ENCODE measurements at regions of chr2 and their contacts with region 1.

Region 1: DNA sequence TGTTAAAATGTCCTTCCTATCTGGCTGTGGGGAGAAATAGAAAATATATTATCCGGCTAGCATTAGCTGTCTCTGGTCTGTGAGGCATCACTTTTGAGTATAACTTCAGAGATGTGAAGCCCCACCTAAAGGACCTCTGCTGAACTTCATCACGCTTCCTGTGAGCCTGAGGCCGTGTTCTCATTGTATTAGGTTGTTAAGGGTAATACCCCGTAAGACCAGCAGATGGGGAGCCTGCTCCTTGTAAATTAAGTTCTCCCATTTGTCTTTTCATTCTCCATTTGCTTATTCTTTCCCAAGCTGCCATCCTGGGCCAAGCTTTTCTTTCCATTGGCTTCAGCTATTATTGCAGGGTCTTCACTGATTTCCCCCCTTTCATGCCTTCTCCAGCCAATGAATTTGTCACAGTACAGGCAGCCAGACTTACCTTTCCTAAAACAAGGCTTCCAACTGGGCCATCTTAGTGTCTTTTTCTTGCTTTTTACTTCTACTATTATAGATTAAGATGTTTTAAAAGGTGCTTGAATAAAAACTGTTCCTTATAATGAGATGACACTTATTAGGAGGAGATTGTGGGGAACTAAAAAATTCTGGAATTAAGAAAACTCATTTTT is 12.4 kb downstream of the NIF3L1 start:
- DNase-seq: peak; percentile 63
- H3K4me3 ChIP-seq: no peak overlapping the region
- H3K27me3 ChIP-seq: no peaks in the 10 kb centered on the region
- CTCF ChIP-seq: peak; percentile 83

Region 2: DNA sequence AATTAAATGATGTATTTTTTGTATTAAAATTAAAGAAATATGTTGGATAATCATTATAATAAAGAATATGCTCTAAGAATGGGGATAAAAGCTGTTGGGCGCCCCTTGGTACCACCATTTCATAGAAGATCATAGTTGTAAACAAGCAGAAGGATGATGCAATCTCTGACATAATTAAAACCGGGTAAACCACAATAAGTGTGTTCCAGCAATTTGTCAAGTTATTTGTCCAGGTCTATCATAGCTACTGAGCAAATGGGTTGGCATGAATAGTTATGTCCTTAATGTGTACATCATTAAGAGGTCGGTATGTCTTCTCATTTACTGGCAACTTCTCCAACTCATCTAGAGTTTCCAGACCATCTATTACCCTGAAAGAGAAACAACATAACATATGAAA is 30.4 kb before region 1 on chr2:
- CTCF ChIA-PET with region 1: no interaction called
- POLR2A ChIA-PET with region 1: no interaction called
- DNase-seq: no peak
- H3K4me3 ChIP-seq: no peak overlapping the region
- H3K27me3 ChIP-seq: no peaks in the 10 kb centered on the region
- CTCF ChIP-seq: no peak

Region 3: GRCh38 chr2:200963124-200963917 is 61.8 kb after region 1 on chr2 and contains the start of gene ORC2:
- CTCF ChIA-PET with region 1: interaction called, 10 read pairs
- POLR2A ChIA-PET with region 1: no interaction called
- DNase-seq: peak; percentile 59
- H3K4me3 ChIP-seq: peak within 1 kb of the TSS; percentile 79
- H3K27me3 ChIP-seq: no peaks in the 10 kb centered on the region
- CTCF ChIP-seq: peak; percentile 64
- polyA plus RNA-seq, gene ORC2: 1.9 and 3.7 TPM in 2 replicates

Region 4: DNA sequence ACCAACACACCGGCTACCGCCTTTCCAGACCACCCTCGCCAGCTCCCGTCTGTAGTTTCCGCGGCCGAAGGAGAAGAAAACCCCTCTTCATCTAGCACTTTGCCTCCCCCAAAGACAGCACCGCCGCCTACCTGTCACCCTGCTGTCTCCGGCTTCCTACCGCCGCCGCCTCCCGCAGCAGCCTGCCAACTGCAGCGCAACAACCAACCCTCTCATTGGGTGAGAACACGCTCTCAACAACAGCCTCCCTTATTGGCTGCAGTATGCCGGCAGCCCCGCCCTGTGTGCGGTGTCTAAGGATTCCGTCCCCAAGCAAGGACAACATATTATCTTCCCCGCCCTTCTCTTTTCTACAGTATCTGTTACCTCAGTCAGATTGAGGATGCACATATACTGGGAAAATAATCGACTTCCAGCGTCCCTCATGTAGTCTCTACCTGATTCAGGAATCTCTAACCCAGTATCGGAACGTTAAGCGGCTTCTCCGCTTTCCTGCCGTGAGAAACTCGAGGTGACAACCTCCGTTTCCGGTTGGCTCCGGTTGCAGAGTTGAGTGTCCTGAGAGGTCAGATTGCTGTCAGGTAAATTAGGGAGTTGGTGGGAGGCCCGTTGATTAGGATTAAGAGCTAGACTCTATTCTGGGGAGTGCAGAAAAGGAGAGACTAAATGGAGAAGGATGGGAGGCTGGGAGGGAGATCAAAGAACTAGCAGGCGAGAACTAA is 170.1 kb after region 1 on chr2 and contains the starts of genes HYCC2 and NDUFB3:
- CTCF ChIA-PET with region 1: interaction called, 87 read pairs
- POLR2A ChIA-PET with region 1: no interaction called
- DNase-seq: peak; percentile 58
- H3K4me3 ChIP-seq: peak within 1 kb of the TSS; percentile 99
- H3K27me3 ChIP-seq: no peaks in the 10 kb centered on the region
- CTCF ChIP-seq: peak; percentile 46
- polyA plus RNA-seq, gene HYCC2: 3.0 and 6.9 TPM in 2 replicates
- polyA plus RNA-seq, gene NDUFB3: 25.2 and 80.0 TPM in 2 replicates

Region 5: DNA sequence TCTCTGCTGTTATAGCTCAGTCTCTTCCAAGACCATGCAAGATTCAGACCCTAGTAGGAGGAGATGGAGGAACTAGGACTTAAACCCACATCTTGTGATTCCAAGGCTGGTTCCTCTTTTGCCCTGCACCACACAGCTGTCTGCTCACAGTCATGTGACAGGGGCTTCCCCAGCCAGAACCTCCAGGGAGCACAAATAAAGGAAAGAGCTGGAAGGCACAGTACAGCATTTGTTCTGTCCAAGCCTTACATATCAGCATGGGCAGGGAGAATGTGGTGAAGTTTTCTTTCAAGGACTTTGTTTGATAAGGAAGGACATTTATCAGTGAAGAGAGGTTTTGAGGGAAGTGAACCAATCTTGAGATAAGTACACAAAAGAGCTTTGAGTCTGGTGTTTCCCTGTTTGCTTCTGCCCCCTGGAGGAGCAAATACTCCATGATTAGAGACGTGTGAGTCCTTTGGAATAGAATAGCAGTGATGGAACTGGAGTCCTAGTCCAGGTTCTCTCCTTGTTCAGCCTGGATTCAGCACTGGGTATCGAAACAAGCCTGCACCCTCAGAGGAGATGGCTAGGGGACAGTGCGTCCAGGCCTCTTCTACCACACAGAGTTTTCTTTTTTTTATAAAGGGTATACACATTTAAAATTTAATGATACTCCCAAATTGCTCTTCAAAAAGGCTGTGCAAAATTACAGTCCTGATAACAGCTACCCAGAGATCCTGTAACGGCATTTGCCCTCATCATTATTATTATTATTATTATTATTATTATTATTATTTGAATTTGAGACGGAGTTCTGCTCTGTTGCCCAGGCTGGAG is 256.8 kb after region 1 on chr2:
- CTCF ChIA-PET with region 1: interaction called, 22 read pairs
- POLR2A ChIA-PET with region 1: no interaction called
- DNase-seq: peak; percentile 31
- H3K4me3 ChIP-seq: no peak overlapping the region
- H3K27me3 ChIP-seq: no peaks in the 10 kb centered on the region
- CTCF ChIP-seq: peak; percentile 71

Region 6: DNA sequence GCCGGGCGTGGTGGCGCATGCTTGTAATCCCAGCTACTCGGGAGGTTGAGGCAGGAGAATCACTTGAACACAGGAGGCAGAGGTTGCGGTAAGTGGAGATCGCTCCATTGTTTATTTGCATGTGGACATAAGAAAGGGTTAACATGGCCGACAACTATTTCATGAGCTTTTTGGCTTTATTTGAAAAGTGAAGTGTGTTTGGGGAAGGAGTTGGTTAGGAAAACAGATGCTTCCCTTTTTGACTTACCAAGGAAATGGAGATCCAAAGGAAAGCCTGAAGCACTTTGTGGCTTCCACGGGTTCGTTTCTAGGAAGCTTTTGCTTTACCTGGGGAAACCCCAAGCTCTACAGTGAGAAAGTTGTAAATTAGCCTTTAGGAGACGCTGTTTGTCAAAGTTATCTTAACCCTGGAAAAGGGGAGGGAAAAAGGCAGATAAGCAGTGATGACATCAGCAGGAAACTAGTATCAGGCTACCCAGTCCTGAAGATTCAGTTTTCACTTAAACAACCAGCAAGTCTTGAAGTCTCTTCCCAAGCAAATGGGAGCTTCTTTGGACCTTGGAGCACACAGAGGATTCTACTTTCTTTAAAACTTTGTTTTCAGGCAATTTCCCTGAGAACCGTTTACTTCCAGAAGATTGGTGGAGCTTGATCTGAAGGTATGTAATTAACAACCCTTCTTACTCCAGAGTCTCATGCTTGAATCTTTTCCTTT is 281.2 kb after region 1 on chr2 and contains the start of gene CASP10:
- CTCF ChIA-PET with region 1: interaction called, 44 read pairs
- POLR2A ChIA-PET with region 1: no interaction called
- DNase-seq: no peak
- H3K4me3 ChIP-seq: peak within 1 kb of the TSS; percentile 29
- H3K27me3 ChIP-seq: no peaks in the 10 kb centered on the region
- CTCF ChIP-seq: no peak
- polyA plus RNA-seq, gene CASP10: 0.83 and 1.0 TPM in 2 replicates

Region 7: DNA sequence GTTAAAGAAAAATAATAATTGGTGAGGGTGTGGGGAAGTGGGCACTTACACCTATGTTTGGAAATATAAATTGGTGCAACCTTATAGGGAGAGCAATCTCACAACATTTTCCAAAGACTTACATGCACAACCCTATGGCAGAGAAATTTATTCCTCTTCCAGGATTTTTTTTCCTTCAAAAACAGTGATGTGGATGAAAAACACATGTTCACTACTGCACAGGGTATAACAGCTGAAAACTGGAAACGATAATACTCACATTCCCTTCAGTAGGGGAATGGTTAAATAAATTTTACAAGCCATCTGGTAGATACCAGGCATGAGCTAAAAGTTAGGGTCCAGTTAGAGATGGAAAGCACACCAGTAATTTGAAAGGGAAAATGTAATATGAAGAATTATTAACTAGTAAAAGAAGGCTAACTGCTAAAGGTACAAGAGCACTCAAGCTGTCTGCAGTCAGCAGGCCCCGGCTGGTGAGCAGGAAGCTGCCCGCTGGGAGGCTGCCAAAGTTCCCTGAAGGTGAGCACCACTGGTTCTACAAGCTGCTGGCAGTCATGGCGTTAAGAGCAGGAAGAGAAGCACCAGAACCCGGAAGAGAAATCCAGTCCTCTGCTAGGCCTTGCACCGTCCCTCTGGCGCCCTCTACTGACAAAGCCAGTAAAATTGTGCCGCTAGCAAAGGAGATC is 330.4 kb after region 1 on chr2:
- CTCF ChIA-PET with region 1: interaction called, 26 read pairs
- POLR2A ChIA-PET with region 1: no interaction called
- DNase-seq: peak; percentile 62
- H3K4me3 ChIP-seq: no peak overlapping the region
- H3K27me3 ChIP-seq: no peaks in the 10 kb centered on the region
- CTCF ChIP-seq: peak; percentile 95

Measured in BJ (cell line).